ENCODE measurements at regions of chr6 and their contacts with region 1.

Region 1: DNA sequence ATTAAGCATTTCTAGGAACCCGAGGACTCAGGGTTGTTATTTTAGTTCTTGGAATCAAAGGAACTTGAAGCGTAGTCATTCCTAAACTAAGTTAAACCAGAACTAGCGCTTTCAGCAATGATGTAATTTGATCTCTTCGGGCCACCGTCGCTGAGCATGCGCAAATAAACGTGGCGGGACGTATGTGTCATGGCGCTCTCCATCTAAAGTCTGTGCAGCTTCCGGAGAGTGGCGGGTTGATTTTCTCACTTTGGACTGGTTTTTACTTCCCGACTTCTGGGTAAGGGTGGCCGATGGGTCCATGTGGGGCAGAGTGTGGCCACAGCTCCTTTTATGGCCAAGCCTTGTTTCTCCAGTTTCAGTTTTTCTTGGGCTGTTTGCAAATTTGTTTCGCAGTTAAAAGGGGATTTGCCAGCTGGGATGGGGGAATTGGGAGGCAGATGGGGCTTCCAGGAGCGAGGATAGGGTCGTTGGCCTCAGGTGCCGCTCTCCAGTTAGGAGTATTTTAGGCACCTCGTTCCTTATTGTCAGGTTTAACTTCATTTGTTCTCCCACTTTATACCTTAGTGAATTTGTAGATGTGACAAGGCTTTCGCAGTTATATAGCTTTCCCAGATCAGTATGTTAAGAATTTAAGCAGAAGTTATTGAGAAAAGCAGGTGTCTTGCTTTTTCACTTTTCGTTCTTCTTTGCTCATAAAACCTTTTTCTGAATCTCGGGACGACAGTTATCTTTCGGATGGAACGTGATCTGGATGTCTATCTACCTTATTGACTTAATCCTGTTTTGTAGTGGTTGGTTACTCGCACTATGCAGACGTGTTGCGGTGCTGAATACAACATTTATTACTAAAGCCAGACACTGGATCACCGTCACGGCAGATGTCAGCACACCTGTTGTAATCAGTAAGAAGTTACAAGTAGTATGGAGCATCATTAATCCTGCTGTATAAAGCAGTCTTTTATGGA is at the start of gene CDKAL1:
- DNase-seq: peak; percentile 96
- ATAC-seq: peak; percentile 93
- H3K4me3 Mint-ChIP-seq: peak within 1 kb of the TSS; percentile 98
- H3K27ac Mint-ChIP-seq: peak within 1 kb of the TSS; percentile 99
- H3K4me1 Mint-ChIP-seq: peaks cover 53% of the 10 kb centered on the region
- H3K27me3 Mint-ChIP-seq: peaks cover 2% of the 10 kb centered on the region
- total RNA-seq, gene CDKAL1: 27.9 to 30.0 TPM

Region 2: DNA sequence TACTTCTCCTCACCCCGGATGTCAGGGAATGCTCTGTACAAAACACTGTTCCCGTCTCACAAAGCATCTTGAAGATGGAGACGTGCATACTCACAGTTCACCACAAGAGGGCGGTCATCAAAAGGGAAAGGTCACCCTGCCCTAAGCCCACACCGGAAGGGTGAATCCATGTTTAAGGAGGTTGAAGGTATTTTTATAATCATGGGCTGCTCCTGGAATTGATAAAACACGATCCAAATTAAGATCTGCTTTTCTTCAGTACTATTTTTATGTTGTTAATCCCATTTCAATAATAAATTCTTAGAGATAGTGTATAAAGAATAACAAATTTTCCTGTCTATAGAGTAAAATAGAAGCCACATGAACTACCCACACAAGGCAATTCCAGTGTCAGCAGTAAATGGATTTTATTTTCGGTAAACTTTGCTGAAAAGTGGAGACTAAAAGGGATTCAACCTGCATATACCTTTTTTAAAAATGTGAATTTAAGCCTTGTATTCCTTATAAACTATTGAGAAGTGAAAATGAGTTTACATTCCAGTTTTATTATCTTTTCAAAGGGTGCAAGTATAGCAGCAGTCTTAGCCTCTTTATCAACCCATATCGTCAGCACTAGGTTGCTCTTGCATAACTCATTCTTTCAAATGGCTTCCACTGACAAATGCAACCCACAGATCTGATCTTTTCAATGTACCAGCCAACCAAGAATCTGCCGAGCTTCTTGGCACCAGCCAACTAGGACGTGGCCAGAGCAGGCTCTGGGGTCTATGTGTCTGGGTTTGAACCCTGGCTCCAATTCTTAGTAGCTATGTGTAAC is 242.6 kb before region 1 on chr6:
- CTCF ChIA-PET with region 1: interaction called, 12 read pairs
- DNase-seq: peak; percentile 84
- ATAC-seq: peak; percentile 88
- H3K4me3 Mint-ChIP-seq: peak overlapping the region; percentile 50
- H3K27ac Mint-ChIP-seq: peak overlapping the region; percentile 39
- H3K4me1 Mint-ChIP-seq: peaks cover 27% of the 10 kb centered on the region
- H3K27me3 Mint-ChIP-seq: no peaks in the 10 kb centered on the region

Region 3: DNA sequence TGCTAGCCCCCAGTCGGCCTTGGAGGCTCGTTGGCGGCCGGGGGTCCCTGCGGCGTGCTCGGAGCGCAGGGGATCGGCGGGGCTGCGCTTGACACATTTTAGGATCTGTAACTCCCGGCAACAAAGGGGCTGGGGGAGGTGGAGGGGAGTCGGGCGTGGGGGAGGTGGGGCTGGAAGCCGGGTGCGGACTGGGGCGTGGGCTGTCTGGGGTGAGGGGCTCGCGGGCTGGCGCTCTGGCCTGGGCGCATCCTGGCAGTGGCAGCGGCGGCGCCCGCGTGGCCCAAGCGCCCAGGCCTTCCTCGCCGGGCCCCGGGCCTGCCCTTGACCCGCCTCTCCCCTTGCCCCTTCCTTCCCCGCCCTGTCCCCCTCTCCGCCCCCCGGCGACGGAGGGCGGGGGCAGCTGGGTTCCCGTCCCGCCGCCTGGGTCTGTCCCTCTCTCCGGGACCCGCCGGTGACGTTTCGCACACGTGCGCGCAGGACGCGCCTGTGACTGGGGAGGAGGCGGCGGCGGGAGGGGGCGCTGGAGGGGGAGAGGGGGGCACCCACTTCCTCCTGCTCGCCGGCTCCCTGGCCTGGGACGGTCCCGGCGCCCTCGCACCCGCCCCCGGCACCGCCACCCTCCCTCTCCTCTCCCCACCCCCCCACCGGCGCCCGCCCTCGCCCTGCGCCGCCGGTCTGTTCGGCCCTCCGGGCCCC is 131.4 kb before region 1 on chr6:
- CTCF ChIA-PET with region 1: interaction called, 17 read pairs
- DNase-seq: peak; percentile 96
- ATAC-seq: peak; percentile 58
- H3K4me3 Mint-ChIP-seq: peak overlapping the region; percentile 92
- H3K27ac Mint-ChIP-seq: peak overlapping the region; percentile 93
- H3K4me1 Mint-ChIP-seq: peaks cover 54% of the 10 kb centered on the region
- H3K27me3 Mint-ChIP-seq: no peaks in the 10 kb centered on the region

Region 4: GRCh38 chr6:20548264-20548663 is 13.7 kb after region 1 on chr6:
- CTCF ChIA-PET with region 1: no interaction called
- DNase-seq: no peak
- ATAC-seq: no peak
- H3K4me3 Mint-ChIP-seq: no peak overlapping the region
- H3K27ac Mint-ChIP-seq: no peak overlapping the region
- H3K4me1 Mint-ChIP-seq: peaks cover 12% of the 10 kb centered on the region
- H3K27me3 Mint-ChIP-seq: no peaks in the 10 kb centered on the region